ENCODE measurements at regions of chr5 and their contacts with region 1.

Region 1: GRCh38 chr5:149128023-149128875 is 13.0 kb upstream of the ABLIM3 start:
- DNase-seq: no peak
- H3K4me3 ChIP-seq: no peak overlapping the region
- H3K27ac ChIP-seq: no peak overlapping the region
- H3K4me1 ChIP-seq: peaks cover 58% of the 10 kb centered on the region
- H3K27me3 ChIP-seq: no peaks in the 10 kb centered on the region
- CTCF ChIP-seq: peak; percentile 70 to 76

Region 2: GRCh38 chr5:149205625-149206523 is 77.6 kb after region 1 on chr5:
- CTCF ChIA-PET with region 1: interaction called, 19 read pairs
- dilution Hi-C with region 1: loop called (anchors 5 kb)
- in situ Hi-C with region 1: no loop called
- intact Hi-C with region 1: no loop called
- DNase-seq: no peak
- H3K4me3 ChIP-seq: no peak overlapping the region
- H3K27ac ChIP-seq: no peak overlapping the region
- H3K4me1 ChIP-seq: peaks cover 33% of the 10 kb centered on the region
- H3K27me3 ChIP-seq: no peaks in the 10 kb centered on the region
- CTCF ChIP-seq: no peak

Region 3: DNA sequence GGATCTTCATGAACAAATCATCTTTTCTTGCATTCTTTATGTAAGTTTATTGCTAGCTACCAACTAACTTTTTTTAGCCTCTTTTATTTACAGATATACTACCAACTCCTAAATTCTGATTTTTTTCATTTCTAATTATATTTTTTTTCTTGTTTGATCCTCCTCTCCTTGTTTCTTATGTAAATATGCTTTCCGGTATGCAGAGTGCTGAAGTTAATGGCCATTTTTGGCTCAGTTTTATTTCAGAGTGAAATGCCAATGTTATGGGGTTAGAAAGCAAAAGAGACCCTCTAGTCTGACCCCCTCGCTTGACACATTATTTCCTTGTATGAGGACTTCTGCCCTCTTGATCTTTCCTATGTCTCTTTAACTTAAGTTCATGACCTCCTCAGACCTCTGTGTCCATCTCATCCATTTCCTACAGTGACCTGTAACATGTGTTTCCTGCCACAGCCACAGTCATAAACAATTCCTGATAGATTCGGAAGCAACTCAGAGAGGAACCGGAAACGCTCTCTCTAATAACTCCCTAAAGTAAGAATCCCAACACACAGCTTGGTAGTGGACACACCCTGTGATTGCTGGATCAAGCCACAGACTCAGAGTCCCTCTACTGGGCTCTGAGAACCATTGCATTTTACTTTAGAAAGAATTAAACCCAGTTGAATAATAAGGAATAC is 100.5 kb after region 1 on chr5:
- CTCF ChIA-PET with region 1: interaction called, 15 read pairs
- dilution Hi-C with region 1: no loop called
- in situ Hi-C with region 1: loop called (anchors 10 to 25 kb)
- intact Hi-C with region 1: loop called (anchors 1 kb)
- DNase-seq: peak; percentile 76
- H3K4me3 ChIP-seq: no peak overlapping the region
- H3K27ac ChIP-seq: no peak overlapping the region
- H3K4me1 ChIP-seq: peaks cover 21% of the 10 kb centered on the region
- H3K27me3 ChIP-seq: no peaks in the 10 kb centered on the region
- CTCF ChIP-seq: peak; percentile 73 to 85

Region 4: DNA sequence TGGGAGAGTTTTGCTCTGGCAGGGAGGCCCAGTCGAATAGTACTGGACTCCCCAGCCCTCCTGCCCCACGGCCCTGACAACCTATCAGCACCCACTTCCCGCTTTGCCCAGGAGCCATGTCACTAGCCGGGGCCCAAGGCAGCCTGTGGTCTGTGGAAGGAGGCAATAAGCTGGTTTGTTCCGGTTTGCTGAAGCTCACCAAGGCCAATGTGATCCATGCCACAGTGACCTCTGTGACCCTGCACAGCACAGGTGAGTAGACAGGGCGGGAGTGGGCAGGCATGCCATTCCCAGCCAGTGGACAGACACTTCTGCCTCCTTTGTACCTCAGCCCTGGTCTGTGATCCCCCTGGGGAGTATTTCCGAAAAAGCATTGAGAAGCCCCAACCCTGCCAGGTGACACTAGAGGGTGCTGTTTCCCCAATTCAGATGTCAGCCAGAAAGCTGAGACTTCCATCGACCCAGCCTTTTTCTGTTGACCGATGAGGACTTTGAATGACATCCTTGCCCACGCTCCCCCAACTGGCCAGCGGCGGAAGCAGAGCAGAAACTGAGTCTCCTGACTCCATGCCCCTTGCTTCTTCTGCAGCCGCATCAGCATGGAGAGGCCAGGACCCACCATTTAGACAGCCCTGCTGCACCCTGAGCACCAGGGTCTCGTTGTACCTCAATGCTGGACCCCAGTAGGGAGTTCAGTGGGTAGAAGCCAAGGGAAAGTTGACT is 239.2 kb after region 1 on chr5:
- CTCF ChIA-PET with region 1: interaction called, 9 read pairs
- dilution Hi-C with region 1: no loop called
- in situ Hi-C with region 1: no loop called
- intact Hi-C with region 1: loop called (anchors 5 kb)
- DNase-seq: peak; percentile 54
- H3K4me3 ChIP-seq: no peak overlapping the region
- H3K27ac ChIP-seq: no peak overlapping the region
- H3K4me1 ChIP-seq: no peaks in the 10 kb centered on the region
- H3K27me3 ChIP-seq: no peaks in the 10 kb centered on the region
- CTCF ChIP-seq: peak; percentile 77 to 85

Region 5: GRCh38 chr5:149526845-149527580 is 398.8 kb after region 1 on chr5:
- CTCF ChIA-PET with region 1: no interaction called
- dilution Hi-C with region 1: no loop called
- in situ Hi-C with region 1: no loop called
- intact Hi-C with region 1: no loop called
- DNase-seq: no peak
- H3K4me3 ChIP-seq: no peak overlapping the region
- H3K27ac ChIP-seq: no peak overlapping the region
- H3K4me1 ChIP-seq: peaks cover 21% of the 10 kb centered on the region
- H3K27me3 ChIP-seq: no peaks in the 10 kb centered on the region
- CTCF ChIP-seq: no peak

Measured in mammary epithelial cell (primary cell).